Heart left ventricle (tissue), 16 donors: ENCODE measurements at regions of chrX and their contacts with region 1.

Region 1: DNA sequence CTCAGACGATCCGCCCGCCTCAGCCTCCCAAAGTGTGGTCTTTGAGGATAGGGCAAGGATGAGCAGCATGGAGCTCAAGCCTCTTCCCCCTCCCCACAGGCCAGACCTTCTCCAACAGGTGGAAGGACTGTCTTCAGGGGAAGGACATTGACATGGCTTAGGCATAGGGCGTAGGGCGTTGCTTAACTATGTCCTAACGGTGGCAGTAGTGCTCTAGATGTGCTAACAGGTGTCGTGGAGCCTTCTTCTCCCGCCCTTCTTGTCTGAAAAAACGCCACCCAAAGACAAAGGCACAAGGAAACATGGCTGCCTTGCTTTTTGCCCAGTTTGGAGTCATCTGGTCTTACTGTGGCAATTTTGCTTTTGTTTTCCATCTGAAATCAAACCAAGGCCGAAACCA is 219.8 kb downstream of the OR13H1 start:
- DNase-seq: peak in 2 of 5 donors; percentile 78
- ATAC-seq: peak in 3 of 4 donors; percentile 42 to 95 (median 93)
- H3K4me3 ChIP-seq: peak overlapping the region in 5 of 12 donors; percentile 1 to 55 (median 47)
- H3K27ac ChIP-seq: peak overlapping the region in 5 of 12 donors; percentile 41 to 76 (median 50)
- H3K4me1 ChIP-seq: peaks cover 0 to 13% (median 0%) of the 10 kb centered on the region in 12 donors
- H3K27me3 ChIP-seq: peaks cover 0 to 11% (median 0%) of the 10 kb centered on the region in 9 donors
- CTCF ChIP-seq: peak in 6 of 12 donors; percentile 4 to 64 (median 52)
- POLR2A ChIP-seq: no peak

Region 2: GRCh38 chrX:131728295-131729145 is 35.2 kb before region 1 on chrX:
- intact Hi-C with region 1: loop called in 1 of 10 experiments (anchors 2 kb)
- DNase-seq: peak in 2 of 5 donors; percentile 70 to 73
- ATAC-seq: peak in 2 of 4 donors; percentile 92 to 93
- H3K4me3 ChIP-seq: peak overlapping the region in 4 of 12 donors; percentile 33 to 61 (median 52)
- H3K27ac ChIP-seq: peak overlapping the region in 6 of 12 donors; percentile 28 to 95 (median 86)
- H3K4me1 ChIP-seq: peaks cover 0 to 5% (median 0%) of the 10 kb centered on the region in 12 donors
- H3K27me3 ChIP-seq: no peaks in the 10 kb centered on the region
- CTCF ChIP-seq: peak in 4 of 12 donors; percentile 37 to 56 (median 48)
- POLR2A ChIP-seq: no peak

Region 3: GRCh38 chrX:131802835-131803626 is 39.4 kb after region 1 on chrX:
- intact Hi-C with region 1: loop called in 1 of 10 experiments (anchors 2 kb)
- DNase-seq: peak in 4 of 5 donors; percentile 17 to 78 (median 44)
- ATAC-seq: peak; percentile 32 to 91 (median 70)
- H3K4me3 ChIP-seq: peak overlapping the region in 5 of 12 donors; percentile 24 to 55 (median 48)
- H3K27ac ChIP-seq: peak overlapping the region in 7 of 12 donors; percentile 23 to 65 (median 34)
- H3K4me1 ChIP-seq: peaks cover 0 to 10% (median 0%) of the 10 kb centered on the region in 12 donors
- H3K27me3 ChIP-seq: peaks cover 0 to 9% (median 0%) of the 10 kb centered on the region in 9 donors
- CTCF ChIP-seq: peak; percentile 10 to 78 (median 34)
- POLR2A ChIP-seq: no peak